ENCODE measurements at regions of chrX and their contacts with region 1.

Region 1: DNA sequence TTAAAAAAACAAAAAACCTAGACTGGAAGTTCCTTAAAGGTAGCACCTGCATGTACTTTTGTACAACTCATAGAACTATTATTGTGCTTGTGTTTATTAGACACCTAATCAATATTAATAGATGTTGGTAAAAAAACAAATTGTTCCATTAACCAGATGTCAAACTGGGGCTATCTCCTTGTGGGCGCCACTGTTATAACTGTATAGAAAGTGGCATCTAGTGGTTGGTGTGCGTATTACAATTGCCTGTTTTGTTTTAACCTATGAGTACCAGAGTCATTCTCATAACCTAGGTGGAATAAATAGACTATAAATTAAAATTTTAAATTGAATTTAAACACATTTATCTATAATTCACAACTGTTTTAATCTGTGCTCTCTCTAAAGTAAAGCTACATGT is 97.4 kb downstream of the COL4A5 start:
- DNase-seq: no peak
- ATAC-seq: peak in 1 of 4 donors; percentile 51
- H3K4me3 ChIP-seq: no peak overlapping the region
- H3K27ac ChIP-seq: no peak overlapping the region
- H3K4me1 ChIP-seq: no peaks in the 10 kb centered on the region
- H3K27me3 ChIP-seq: peaks cover 0 to 6% (median 0%) of the 10 kb centered on the region in 9 donors
- CTCF ChIP-seq: peak; percentile 36 to 65 (median 56)
- POLR2A ChIP-seq: no peak

Region 2: DNA sequence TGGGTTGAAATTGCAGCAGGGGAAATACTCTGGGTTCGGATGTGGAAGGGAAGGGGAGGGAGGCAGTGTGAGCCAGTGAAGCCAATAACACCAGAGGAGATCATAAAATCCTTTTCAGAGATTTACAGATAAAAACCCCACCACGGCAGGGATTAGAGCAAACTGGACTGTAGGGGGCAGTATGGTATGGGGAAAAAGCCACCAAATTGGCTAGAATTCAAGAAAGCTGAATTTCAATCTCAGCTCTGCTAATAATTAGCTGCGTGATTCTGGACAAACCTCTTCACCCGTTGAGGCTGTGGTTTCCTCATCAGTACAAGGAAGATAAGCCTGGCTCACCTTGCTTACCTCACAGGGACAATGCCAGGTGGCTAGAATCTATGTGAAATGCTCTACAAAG is 337.3 kb before region 1 on chrX:
- intact Hi-C with region 1: loop called in 2 of 10 experiments (anchors 5 to 10 kb)
- DNase-seq: no peak
- ATAC-seq: no peak
- H3K4me3 ChIP-seq: no peak overlapping the region
- H3K27ac ChIP-seq: no peak overlapping the region
- H3K4me1 ChIP-seq: no peaks in the 10 kb centered on the region
- H3K27me3 ChIP-seq: peaks cover 0 to 61% (median 0%) of the 10 kb centered on the region in 9 donors
- CTCF ChIP-seq: peak; percentile 24 to 60 (median 46)
- POLR2A ChIP-seq: no peak

Region 3: DNA sequence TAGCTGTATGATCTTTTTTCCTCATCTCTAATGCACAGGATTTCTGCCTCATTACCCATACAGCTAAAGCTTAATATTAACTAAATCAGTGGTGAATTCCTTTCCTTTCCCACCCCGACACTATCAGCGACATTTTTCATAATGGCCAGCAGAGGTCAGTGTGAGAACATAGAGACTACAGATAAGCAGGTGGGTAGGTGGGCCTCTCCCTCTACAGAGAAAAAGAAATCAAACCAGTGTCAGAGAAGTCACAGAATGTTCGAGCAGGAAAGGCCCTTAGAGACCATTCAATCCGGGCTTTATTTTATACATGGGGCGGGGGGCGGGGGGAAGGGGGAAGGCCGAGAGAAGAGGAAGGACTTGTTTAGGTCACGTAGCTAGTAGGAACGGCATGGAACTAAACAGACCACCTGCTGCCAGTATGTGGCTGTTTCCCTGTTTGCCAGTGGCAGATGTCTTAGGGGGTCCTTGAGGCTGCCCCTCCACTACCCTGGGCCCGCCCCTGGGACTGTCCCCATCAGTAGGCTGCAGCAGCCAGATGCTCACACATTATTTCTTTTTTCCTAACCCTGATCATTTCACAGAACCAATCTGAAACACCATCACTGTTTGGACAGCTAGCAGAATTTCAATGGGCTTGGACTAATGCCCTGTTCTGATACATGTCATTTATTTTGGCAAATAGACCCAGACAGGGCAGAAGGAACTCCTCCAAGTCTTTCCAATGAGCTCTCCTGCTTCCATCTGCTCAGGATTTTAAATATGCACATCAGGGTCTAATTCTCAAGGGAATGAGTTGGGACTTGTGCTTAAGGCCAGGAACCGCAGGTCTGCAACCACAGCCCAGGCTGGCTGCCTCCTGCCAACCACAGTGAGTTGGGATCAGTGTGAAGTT is 312.0 kb before region 1 on chrX:
- intact Hi-C with region 1: loop called in 8 of 10 experiments (anchors 5 to 10 kb)
- DNase-seq: no peak
- ATAC-seq: peak; percentile 25 to 62 (median 48)
- H3K4me3 ChIP-seq: no peak overlapping the region
- H3K27ac ChIP-seq: peak overlapping the region in 1 of 12 donors; percentile 24
- H3K4me1 ChIP-seq: peaks cover 0 to 12% (median 0%) of the 10 kb centered on the region in 12 donors
- H3K27me3 ChIP-seq: peaks cover 0 to 48% (median 0%) of the 10 kb centered on the region in 9 donors
- CTCF ChIP-seq: peak; percentile 33 to 60 (median 48)
- POLR2A ChIP-seq: no peak